Motor neuron (in vitro differentiated cells): ENCODE measurements at regions of chr7 and their contacts with region 1.

Region 1: DNA sequence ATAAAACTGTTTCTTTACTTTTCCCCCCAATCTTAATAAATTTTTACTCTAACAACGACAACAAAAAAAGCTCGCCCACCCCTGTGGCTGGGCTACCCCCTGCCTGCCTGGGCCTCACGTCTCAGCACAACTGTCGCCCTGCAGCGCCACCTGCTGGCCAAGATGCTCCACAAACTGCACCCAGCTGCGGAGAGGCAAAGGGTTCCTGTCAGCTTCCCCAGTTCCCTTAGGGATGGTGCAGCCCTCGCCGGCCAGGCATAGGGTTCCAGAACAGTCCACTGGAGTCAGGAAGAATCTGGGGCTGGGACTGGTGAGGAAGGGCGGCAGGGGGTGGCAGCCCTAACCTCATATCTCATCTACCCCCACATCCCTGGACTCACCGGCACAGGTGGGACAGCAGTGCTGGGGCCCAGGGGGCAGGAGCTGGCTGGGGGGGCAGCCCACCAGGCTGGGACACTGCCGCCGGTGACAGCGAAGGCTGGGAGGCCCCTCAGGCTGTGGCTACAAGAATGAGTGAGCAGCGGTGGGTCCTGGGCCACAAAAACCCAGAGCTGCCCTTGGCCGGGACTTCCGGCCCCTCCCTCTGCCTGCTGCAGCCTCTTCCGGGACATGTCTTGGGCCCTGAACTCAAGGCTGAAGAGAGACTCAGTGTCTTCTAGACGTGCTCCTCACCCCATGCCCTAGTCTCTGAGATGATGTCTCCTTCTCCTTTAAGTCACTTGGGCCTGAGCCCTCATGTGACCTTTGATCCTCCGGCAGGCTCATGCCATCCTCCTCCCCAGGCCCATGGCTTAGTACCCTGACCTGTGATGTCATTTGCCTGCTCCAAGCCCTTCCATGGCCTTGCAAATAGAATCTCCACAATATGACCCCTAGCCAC is 21.2 kb downstream of the ATP6V1F start:
- ATAC-seq: peak; percentile 31 to 82 (median 48)
- H3K4me3 ChIP-seq: no peak overlapping the region
- H3K27ac ChIP-seq: no peak overlapping the region
- H3K4me1 ChIP-seq: peaks cover 0 to 7% of the 10 kb centered on the region in 2 donors

Region 2: GRCh38 chr7:128409596-128410160 is 474.2 kb before region 1 on chr7 and contains the start of gene IMPDH1:
- in situ Hi-C with region 1: loop called in 1 of 9 experiments (anchors 25 kb)
- ATAC-seq: peak; percentile 72 to 87 (median 79)
- H3K4me3 ChIP-seq: peak within 1 kb of the TSS; percentile 40 to 59 (median 53)
- H3K27ac ChIP-seq: peak within 1 kb of the TSS in 1 of 2 donors; percentile 49
- H3K4me1 ChIP-seq: peaks cover 17 to 31% of the 10 kb centered on the region in 2 donors
- total RNA-seq, gene IMPDH1: 18.1 to 33.7 (median 31.6) TPM

Region 3: DNA sequence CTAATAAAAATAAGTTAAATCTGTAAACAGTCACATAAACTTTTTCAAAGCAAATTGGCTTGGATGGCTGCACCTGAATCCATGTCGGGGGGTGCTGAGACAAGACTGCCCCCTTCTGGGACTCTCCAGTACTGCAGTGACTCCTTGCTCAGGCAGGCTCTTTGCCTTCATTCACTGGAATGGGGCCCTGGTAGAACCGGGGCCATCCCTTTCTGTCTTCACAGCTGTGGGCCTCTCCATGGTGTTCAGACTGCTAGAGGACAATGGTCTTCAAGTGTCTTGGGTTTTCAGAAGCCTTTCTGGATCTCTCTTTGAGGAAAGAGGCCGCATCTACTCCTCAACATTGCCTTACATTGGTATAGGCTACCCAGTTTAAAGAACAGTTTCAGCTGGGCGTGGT is 458.0 kb before region 1 on chr7:
- in situ Hi-C with region 1: loop called in 3 of 9 experiments (anchors 25 kb)
- ATAC-seq: peak; percentile 42 to 80 (median 54)
- H3K4me3 ChIP-seq: no peak overlapping the region
- H3K27ac ChIP-seq: no peak overlapping the region
- H3K4me1 ChIP-seq: no peaks in the 10 kb centered on the region

Region 4: GRCh38 chr7:128455551-128456254 is 428.2 kb before region 1 on chr7 and contains the start of gene HILPDA:
- in situ Hi-C with region 1: loop called in 1 of 9 experiments (anchors 25 kb)
- ATAC-seq: peak; percentile 80 to 97 (median 94)
- H3K4me3 ChIP-seq: peak within 1 kb of the TSS; percentile 51 to 91 (median 57)
- H3K27ac ChIP-seq: peak within 1 kb of the TSS; percentile 72 to 82
- H3K4me1 ChIP-seq: peaks cover 31 to 35% of the 10 kb centered on the region in 2 donors
- total RNA-seq, gene HILPDA: 7.7 to 62.1 (median 19.7) TPM